Activated CD4-positive, alpha-beta T cell treated with anti-CD3 and anti-CD28 coated beads, Interleukin-2, amount 10 ng/mL, durations not matched to agents 24 days and 14 days (primary cell): ENCODE measurements at regions of chr9 and their contacts with region 1.

Region 1: GRCh38 chr9:131502781-131503625 is at the start of gene POMT1:
- DNase-seq: peak; percentile 98
- H3K4me3 Mint-ChIP-seq: peak within 1 kb of the TSS; percentile 99
- H3K27ac Mint-ChIP-seq: peak within 1 kb of the TSS; percentile 91
- H3K4me1 Mint-ChIP-seq: peaks cover 44% of the 10 kb centered on the region
- H3K27me3 Mint-ChIP-seq: no peaks in the 10 kb centered on the region
- total RNA-seq, gene POMT1: 32.8 and 34.6 TPM in 2 replicates

Region 2: GRCh38 chr9:131270171-131271015 is 232.6 kb before region 1 on chr9:
- intact Hi-C with region 1: loop called (anchors 5 kb)
- DNase-seq: peak; percentile 87
- H3K4me3 Mint-ChIP-seq: peak overlapping the region; percentile 87
- H3K27ac Mint-ChIP-seq: peak overlapping the region; percentile 99
- H3K4me1 Mint-ChIP-seq: peaks cover 57% of the 10 kb centered on the region
- H3K27me3 Mint-ChIP-seq: no peaks in the 10 kb centered on the region

Region 3: GRCh38 chr9:131393622-131394463 is 109.2 kb before region 1 on chr9 and contains the start of gene PRRC2B:
- intact Hi-C with region 1: loop called (anchors 2 kb)
- DNase-seq: peak; percentile 95
- H3K4me3 Mint-ChIP-seq: peak within 1 kb of the TSS; percentile 91
- H3K27ac Mint-ChIP-seq: peak within 1 kb of the TSS; percentile 94
- H3K4me1 Mint-ChIP-seq: peaks cover 39% of the 10 kb centered on the region
- H3K27me3 Mint-ChIP-seq: peaks cover 5% of the 10 kb centered on the region
- total RNA-seq, gene PRRC2B: 114 and 128 TPM in 2 replicates

Region 4: GRCh38 chr9:131578731-131579504 is 75.9 kb after region 1 on chr9:
- intact Hi-C with region 1: loop called (anchors 5 kb)
- DNase-seq: peak; percentile 83
- H3K4me3 Mint-ChIP-seq: peak overlapping the region; percentile 71
- H3K27ac Mint-ChIP-seq: peak overlapping the region; percentile 92
- H3K4me1 Mint-ChIP-seq: peaks cover 14% of the 10 kb centered on the region
- H3K27me3 Mint-ChIP-seq: no peaks in the 10 kb centered on the region

Region 5: DNA sequence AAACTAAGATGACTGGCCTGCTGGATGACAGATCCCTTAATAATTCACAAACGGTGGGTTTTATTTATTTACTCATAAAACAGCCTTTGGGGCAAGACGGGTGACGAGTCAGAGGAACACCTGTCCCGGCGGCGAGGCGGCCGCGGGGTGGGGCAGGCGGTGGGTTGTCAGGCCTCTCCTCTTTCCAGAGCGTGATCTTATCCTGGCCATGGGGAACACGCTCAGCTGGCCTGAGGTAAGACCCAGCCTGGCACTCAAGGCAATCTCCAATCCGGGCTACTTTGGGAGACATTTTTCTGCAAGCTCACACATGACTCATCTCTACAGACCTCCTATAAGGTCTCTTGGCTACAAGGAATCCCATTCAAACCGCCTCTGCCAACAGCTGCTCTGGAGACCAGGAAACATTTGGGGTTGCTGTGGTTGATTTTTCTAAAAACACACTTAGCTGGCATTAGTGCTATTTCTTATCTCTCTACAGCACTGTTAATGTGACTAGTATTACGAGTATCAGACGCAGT is 230.6 kb after region 1 on chr9:
- intact Hi-C with region 1: loop called (anchors 2 kb)
- DNase-seq: peak; percentile 80
- H3K4me3 Mint-ChIP-seq: peak overlapping the region; percentile 79
- H3K27ac Mint-ChIP-seq: peak overlapping the region; percentile 93
- H3K4me1 Mint-ChIP-seq: peaks cover 78% of the 10 kb centered on the region
- H3K27me3 Mint-ChIP-seq: no peaks in the 10 kb centered on the region

Region 6: GRCh38 chr9:131747356-131747755 is 244.4 kb after region 1 on chr9:
- intact Hi-C with region 1: loop called (anchors 2 kb)
- DNase-seq: peak; percentile 80
- H3K4me3 Mint-ChIP-seq: no peak overlapping the region
- H3K27ac Mint-ChIP-seq: no peak overlapping the region
- H3K4me1 Mint-ChIP-seq: peaks cover 41% of the 10 kb centered on the region
- H3K27me3 Mint-ChIP-seq: peaks cover 5% of the 10 kb centered on the region